Lower leg skin (tissue), 4 donors: ENCODE measurements at regions of chr17 and their contacts with region 1.

Region 1: GRCh38 chr17:2414446-2415064 is 13.7 kb upstream of the MNT start:
- DNase-seq: no peak
- H3K4me3 ChIP-seq: no peak overlapping the region
- CTCF ChIP-seq: no peak
- POLR2A ChIP-seq: no peak

Region 2: GRCh38 chr17:2380226-2380922 is 34.2 kb before region 1 on chr17:
- intact Hi-C with region 1: loop called (anchors 2 kb)
- DNase-seq: no peak
- H3K4me3 ChIP-seq: no peak overlapping the region
- CTCF ChIP-seq: no peak
- POLR2A ChIP-seq: no peak

Region 3: DNA sequence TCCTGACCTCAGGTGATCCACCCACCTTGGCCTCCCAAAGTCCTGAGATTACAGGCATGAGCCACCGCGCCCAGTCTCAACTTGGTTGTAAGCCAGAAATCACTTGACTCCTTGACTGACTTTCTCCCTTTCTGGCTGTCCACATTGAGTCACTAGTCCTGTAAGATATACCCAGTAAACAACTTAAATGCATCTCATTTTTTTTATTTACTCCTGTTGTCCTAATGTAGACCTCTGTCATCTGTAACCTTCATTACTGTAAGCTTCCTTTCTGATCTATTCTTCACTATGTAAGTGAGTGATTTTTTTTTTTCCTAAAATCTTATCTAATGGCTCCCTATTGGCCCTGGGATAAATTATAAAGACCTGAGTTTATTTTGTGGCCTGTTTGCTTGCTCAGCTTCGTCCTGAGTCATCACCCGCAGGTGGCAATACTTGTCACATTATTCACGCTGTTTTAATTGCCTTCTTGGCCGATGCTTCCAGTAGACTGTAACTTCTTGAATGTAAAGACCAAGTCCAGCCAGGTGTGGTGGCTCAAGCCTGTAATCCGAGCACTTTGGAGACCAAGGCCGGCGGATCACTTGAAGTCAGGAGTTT is 219.9 kb after region 1 on chr17:
- intact Hi-C with region 1: no loop called
- DNase-seq: no peak
- H3K4me3 ChIP-seq: no peak overlapping the region
- CTCF ChIP-seq: no peak
- POLR2A ChIP-seq: no peak